Adrenal gland (tissue), 19 donors: ENCODE measurements at regions of chr18 and their contacts with region 1.

Region 1: GRCh38 chr18:22694954-22695353 is 238.2 kb upstream of the RBBP8 start:
- DNase-seq: peak; percentile 86 to 95 (median 95)
- H3K4me3 ChIP-seq: peak overlapping the region in 1 of 4 donors; percentile 22
- H3K27ac ChIP-seq: peak overlapping the region; percentile 40 to 84 (median 66)
- H3K4me1 ChIP-seq: peaks cover 16 to 24% of the 10 kb centered on the region in 2 donors
- H3K27me3 ChIP-seq: no peaks in the 10 kb centered on the region
- CTCF ChIP-seq: no peak
- POLR2A ChIP-seq: peak in 1 of 2 donors; percentile 80

Region 2: GRCh38 chr18:22432672-22433137 is 262.2 kb before region 1 on chr18:
- intact Hi-C with region 1: no loop called
- DNase-seq: peak; percentile 64 to 94 (median 87)
- H3K4me3 ChIP-seq: no peak overlapping the region
- H3K27ac ChIP-seq: peak overlapping the region in 2 of 5 donors; percentile 3 to 19
- H3K4me1 ChIP-seq: peaks cover 0 to 5% of the 10 kb centered on the region in 2 donors
- H3K27me3 ChIP-seq: no peaks in the 10 kb centered on the region
- CTCF ChIP-seq: no peak
- POLR2A ChIP-seq: no peak

Region 3: DNA sequence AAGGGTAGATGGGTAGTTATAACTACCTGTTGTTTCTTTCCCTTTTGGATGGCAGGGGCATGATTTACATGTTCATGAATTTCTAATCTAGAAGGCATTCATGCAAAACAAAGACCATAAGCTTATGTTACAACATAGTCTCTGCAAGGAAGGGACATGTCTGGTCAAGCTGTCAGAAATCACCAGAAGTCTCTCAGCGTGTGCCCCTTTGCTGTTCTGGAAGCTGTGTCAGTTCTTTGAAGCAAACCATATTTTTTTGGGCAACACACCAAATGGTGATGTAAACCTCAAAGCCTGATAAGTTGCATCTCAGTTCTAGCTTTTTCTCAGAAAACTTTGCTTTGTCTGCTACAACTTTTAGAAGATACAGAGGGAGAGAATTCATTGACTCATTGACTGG is 103.7 kb before region 1 on chr18:
- intact Hi-C with region 1: loop called in 1 of 2 experiments (anchors 10 kb)
- DNase-seq: no peak
- H3K4me3 ChIP-seq: no peak overlapping the region
- H3K27ac ChIP-seq: no peak overlapping the region
- H3K4me1 ChIP-seq: no peaks in the 10 kb centered on the region
- H3K27me3 ChIP-seq: no peaks in the 10 kb centered on the region
- CTCF ChIP-seq: no peak
- POLR2A ChIP-seq: no peak